Activated CD4-positive, alpha-beta T cell treated with anti-CD3 and anti-CD28 coated beads for 36 hours (primary cell): ENCODE measurements at regions of chr3 and their contacts with region 1.

Region 1: GRCh38 chr3:69161587-69162307 is 39.4 kb upstream of the LMOD3 start:
- DNase-seq: peak; percentile 38
- ATAC-seq: peak; percentile 65
- H3K4me3 Mint-ChIP-seq: no peak overlapping the region
- H3K27ac Mint-ChIP-seq: no peak overlapping the region
- H3K4me1 Mint-ChIP-seq: peaks cover 16% of the 10 kb centered on the region
- H3K27me3 Mint-ChIP-seq: no peaks in the 10 kb centered on the region

Region 2: DNA sequence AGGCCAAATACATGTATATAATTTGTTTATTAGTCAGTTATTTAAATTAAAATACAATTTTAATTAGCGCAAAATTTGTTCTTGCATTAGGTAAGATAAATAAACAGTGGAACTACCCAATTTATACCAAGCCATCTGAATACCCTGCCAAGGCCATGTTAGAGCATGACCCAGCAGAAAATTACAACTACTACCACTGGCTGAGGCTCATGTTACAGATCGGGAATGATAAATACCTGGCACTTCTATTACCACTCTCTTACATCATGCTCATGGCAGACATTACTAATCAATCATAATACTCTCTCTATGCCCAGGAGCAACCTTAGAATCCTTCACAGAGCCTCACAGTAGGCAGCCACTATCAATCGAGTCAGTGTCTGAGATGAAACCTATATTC is 18.1 kb before region 1 on chr3:
- CTCF ChIA-PET with region 1: interaction called, 14 read pairs
- POLR2A ChIA-PET with region 1: no interaction called
- intact Hi-C with region 1: no loop called
- DNase-seq: no peak
- ATAC-seq: no peak
- H3K4me3 Mint-ChIP-seq: no peak overlapping the region
- H3K27ac Mint-ChIP-seq: no peak overlapping the region
- H3K4me1 Mint-ChIP-seq: no peaks in the 10 kb centered on the region
- H3K27me3 Mint-ChIP-seq: no peaks in the 10 kb centered on the region

Region 3: DNA sequence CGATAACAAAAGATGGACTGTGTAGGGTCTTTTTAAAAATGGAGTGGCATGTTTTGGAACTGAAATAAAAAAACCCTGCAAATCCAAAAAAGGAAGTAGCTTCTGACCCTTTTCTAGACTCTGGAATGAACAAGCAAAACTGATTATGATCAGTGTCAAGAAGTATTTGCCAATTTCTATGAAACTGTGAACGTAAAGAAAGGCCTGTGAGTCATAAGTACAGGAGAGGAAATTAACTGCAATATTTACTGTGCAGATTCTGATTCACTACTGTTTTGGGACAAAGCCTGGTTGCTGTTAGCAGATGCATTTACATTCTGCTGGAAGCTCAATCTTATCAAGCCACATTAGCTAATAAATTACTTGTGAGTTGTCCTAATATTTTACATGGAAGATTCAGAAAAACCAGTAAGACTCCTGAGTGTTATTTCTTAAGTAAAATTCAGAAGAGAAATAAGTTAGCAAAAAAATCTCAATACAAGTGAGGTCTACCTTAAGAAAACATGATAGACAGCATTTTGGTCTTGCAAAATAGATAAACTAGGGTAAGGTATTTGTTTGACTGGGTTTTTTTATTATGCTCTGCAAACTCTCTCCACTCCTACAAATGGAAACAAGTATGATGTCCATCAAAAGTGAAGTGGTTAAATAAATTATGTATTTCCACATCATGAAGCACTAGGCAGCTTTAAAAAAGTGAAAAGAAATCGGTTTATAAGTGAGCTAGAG is 50.8 kb after region 1 on chr3:
- CTCF ChIA-PET with region 1: interaction called, 13 read pairs
- POLR2A ChIA-PET with region 1: no interaction called
- intact Hi-C with region 1: loop called in 1 of 2 experiments (anchors 2 kb)
- DNase-seq: no peak
- ATAC-seq: peak; percentile 88
- H3K4me3 Mint-ChIP-seq: no peak overlapping the region
- H3K27ac Mint-ChIP-seq: peak overlapping the region; percentile 58
- H3K4me1 Mint-ChIP-seq: peaks cover 32% of the 10 kb centered on the region
- H3K27me3 Mint-ChIP-seq: peaks cover 3% of the 10 kb centered on the region

Region 4: GRCh38 chr3:69288161-69288895 is 126.6 kb after region 1 on chr3:
- CTCF ChIA-PET with region 1: interaction called, 16 read pairs
- POLR2A ChIA-PET with region 1: no interaction called
- intact Hi-C with region 1: no loop called
- DNase-seq: peak; percentile 77
- ATAC-seq: peak; percentile 97
- H3K4me3 Mint-ChIP-seq: peak overlapping the region; percentile 20
- H3K27ac Mint-ChIP-seq: peak overlapping the region; percentile 16
- H3K4me1 Mint-ChIP-seq: peaks cover 22% of the 10 kb centered on the region
- H3K27me3 Mint-ChIP-seq: no peaks in the 10 kb centered on the region

Region 5: GRCh38 chr3:69324362-69325025 is 162.7 kb after region 1 on chr3:
- CTCF ChIA-PET with region 1: interaction called, 10 read pairs
- POLR2A ChIA-PET with region 1: no interaction called
- intact Hi-C with region 1: no loop called
- DNase-seq: peak; percentile 15
- ATAC-seq: peak; percentile 34
- H3K4me3 Mint-ChIP-seq: no peak overlapping the region
- H3K27ac Mint-ChIP-seq: peak overlapping the region; percentile 43
- H3K4me1 Mint-ChIP-seq: peaks cover 45% of the 10 kb centered on the region
- H3K27me3 Mint-ChIP-seq: no peaks in the 10 kb centered on the region

Region 6: GRCh38 chr3:69410250-69410649 is 248.5 kb after region 1 on chr3:
- CTCF ChIA-PET with region 1: interaction called, 24 read pairs
- POLR2A ChIA-PET with region 1: no interaction called
- intact Hi-C with region 1: loop called (anchors 1 kb)
- DNase-seq: peak; percentile 82
- ATAC-seq: peak; percentile 98
- H3K4me3 Mint-ChIP-seq: no peak overlapping the region
- H3K27ac Mint-ChIP-seq: no peak overlapping the region
- H3K4me1 Mint-ChIP-seq: peaks cover 4% of the 10 kb centered on the region
- H3K27me3 Mint-ChIP-seq: peaks cover 3% of the 10 kb centered on the region

Region 7: DNA sequence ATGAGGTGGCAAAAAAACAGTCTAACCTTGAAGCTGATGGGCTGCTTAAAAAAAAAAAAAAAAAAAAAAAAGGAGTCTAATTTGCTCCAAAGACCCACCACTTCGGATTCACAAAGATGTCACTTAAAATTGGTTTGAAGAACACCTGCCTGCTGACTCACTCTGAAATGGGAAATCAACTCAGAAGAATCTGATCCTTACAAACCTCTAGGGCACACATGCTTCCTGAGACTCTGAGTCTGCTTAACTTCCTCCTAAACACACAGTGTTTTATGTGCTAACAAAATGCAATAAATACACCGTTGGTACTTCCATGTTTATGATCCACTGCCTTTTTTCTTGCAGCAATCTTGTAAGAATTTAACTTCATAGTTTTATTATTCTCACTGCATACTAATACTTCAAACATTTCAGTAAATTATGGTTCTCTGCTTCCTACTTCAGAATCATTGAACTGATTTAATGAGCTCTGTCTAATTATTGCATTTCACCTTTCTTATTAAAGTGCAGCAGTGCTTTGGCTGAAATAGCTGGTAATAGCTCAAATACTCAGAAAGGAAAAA is 297.1 kb after region 1 on chr3:
- CTCF ChIA-PET with region 1: no interaction called
- POLR2A ChIA-PET with region 1: no interaction called
- intact Hi-C with region 1: no loop called
- DNase-seq: no peak
- ATAC-seq: no peak
- H3K4me3 Mint-ChIP-seq: no peak overlapping the region
- H3K27ac Mint-ChIP-seq: no peak overlapping the region
- H3K4me1 Mint-ChIP-seq: no peaks in the 10 kb centered on the region
- H3K27me3 Mint-ChIP-seq: peaks cover 7% of the 10 kb centered on the region

Region 8: GRCh38 chr3:69491975-69492374 is 330.2 kb after region 1 on chr3:
- CTCF ChIA-PET with region 1: no interaction called
- POLR2A ChIA-PET with region 1: no interaction called
- intact Hi-C with region 1: no loop called
- DNase-seq: no peak
- ATAC-seq: no peak
- H3K4me3 Mint-ChIP-seq: no peak overlapping the region
- H3K27ac Mint-ChIP-seq: no peak overlapping the region
- H3K4me1 Mint-ChIP-seq: no peaks in the 10 kb centered on the region
- H3K27me3 Mint-ChIP-seq: peaks cover 4% of the 10 kb centered on the region